WTC11 (cell line): ENCODE measurements at regions of chr19 and their contacts with region 1.

Region 1: GRCh38 chr19:56140583-56141416 is at the start of gene ZNF444:
- DNase-seq: peak; percentile 99
- ATAC-seq: peak; percentile 93
- H3K4me3 Mint-ChIP-seq: peak within 1 kb of the TSS; percentile 79
- H3K27ac Mint-ChIP-seq: peak within 1 kb of the TSS; percentile 95
- H3K4me1 Mint-ChIP-seq: peaks cover 37% of the 10 kb centered on the region
- H3K27me3 Mint-ChIP-seq: peaks cover 3% of the 10 kb centered on the region; the same call in 1 of the 2 replicates
- CTCF ChIP-seq: no peak
- total RNA-seq, gene ZNF444: 84.0 to 87.9 TPM (median 87.7 TPM) in 3 replicates

Region 2: GRCh38 chr19:56105090-56105701 is 35.6 kb before region 1 on chr19:
- CTCF ChIA-PET with region 1: interaction called, 11 read pairs
- POLR2A ChIA-PET with region 1: no interaction called
- DNase-seq: peak; percentile 87
- ATAC-seq: peak; percentile 86
- H3K4me3 Mint-ChIP-seq: 0 out of 2 replicates have a peak overlapping the region, but pooled peaks have one; percentile 12
- H3K27ac Mint-ChIP-seq: peak overlapping the region; percentile 91
- H3K4me1 Mint-ChIP-seq: peaks cover 42% of the 10 kb centered on the region
- H3K27me3 Mint-ChIP-seq: no peaks in the 10 kb centered on the region
- CTCF ChIP-seq: peak; percentile 60